SK-N-SH (cell line): ENCODE measurements at regions of chr2 and their contacts with region 1.

Region 1: DNA sequence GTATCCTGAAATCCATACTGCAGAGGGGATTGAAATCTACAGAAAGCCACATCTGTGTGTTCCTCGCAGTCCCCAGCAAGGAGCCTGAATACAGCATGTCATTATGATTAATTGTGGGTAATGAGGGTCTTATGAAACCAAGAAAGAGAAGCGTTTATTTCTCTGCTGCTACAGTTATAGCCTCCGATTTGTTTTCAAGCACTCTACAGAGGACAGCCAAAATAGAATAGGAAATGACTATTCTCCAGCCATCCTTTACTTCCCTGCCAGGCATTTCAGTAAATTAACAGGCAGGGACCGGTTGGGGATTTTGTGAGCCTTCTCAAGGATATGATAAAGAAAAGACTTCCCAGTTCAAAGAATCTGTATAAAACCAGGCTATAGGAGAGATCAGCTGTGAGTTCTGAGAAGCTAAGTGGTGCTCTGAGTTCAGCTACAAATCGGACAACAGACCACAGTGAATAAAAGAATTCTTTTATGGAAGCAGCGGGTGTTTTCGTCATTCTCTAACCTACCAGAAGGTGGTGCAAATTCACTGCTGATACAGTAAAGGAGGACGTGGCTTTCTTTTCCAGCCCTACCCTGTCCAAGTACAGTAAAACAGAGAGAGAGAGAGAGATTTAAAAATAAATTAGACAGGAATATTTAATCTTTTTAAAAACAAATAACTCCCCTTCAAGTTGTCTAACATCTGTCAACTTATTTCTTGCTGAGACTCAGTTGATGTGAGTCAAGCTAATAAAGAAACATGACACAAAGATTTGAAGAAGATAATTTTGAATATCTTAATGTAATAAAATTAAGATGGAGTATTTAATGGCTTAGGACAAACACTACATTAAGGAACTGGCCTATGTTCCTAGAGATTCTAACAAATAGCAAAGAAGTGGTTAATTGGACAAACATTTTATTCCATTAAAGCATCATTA is 133.7 kb downstream of the INSIG2 start:
- DNase-seq: peak; percentile 72
- H3K4me3 ChIP-seq: no peak overlapping the region; a peak in 1 of 4 replicates
- H3K27ac ChIP-seq: no peak overlapping the region
- H3K4me1 ChIP-seq: peaks cover 0 to 5% of the 10 kb centered on the region in 2 experiments; a peak in 1 of 4 replicates
- H3K27me3 ChIP-seq: peaks cover 56% of the 10 kb centered on the region
- CTCF ChIP-seq: peak; percentile 80
- EP300 ChIP-seq: no peak
- RAD21 ChIP-seq: peak; percentile 87

Region 2: DNA sequence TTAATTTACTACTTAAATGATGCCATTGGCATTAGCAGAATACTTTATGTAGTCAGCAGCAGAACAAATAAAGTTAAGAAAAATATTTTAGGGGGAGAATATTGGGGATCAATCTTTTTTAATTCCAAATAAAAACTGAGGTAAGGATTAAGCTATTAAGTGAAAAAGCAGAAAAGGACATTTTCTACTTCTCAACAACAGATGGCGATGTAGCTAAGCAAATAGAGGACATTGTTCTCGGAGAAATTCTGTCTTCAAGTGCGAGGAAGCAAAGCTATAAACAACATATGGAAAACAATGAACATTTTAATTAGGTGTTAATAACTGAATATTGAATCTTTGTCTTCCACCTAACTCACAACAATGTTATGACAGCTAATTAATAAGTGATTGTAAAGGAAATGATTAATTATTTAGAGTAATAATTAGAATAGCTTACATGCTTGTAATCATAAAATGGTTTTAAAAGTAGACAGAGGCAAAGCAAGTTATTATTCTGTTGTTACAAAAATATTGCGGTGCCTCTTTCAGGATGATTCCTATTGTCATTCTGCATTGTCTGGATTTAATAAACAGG is 175.2 kb before region 1 on chr2:
- CTCF ChIA-PET with region 1: interaction called, 15 read pairs
- POLR2A ChIA-PET with region 1: no interaction called
- DNase-seq: peak; percentile 23
- H3K4me3 ChIP-seq: peak overlapping the region in 1 of 2 experiments; percentile 2; a peak in 1 of 4 replicates
- H3K27ac ChIP-seq: no peak overlapping the region
- H3K4me1 ChIP-seq: peaks cover 0 to 8% of the 10 kb centered on the region in 2 experiments; a peak in 1 of 4 replicates
- H3K27me3 ChIP-seq: no peaks in the 10 kb centered on the region; the same call in 1 of the 2 replicates
- CTCF ChIP-seq: peak; percentile 72
- EP300 ChIP-seq: no peak
- RAD21 ChIP-seq: peak; percentile 88

Region 3: GRCh38 chr2:118202707-118203303 is 19.1 kb before region 1 on chr2:
- CTCF ChIA-PET with region 1: interaction called, 12 read pairs
- POLR2A ChIA-PET with region 1: no interaction called
- DNase-seq: peak; percentile 54
- H3K4me3 ChIP-seq: peak overlapping the region in 1 of 2 experiments; percentile 38; a peak in 1 of 4 replicates
- H3K27ac ChIP-seq: no peak overlapping the region
- H3K4me1 ChIP-seq: no peaks in the 10 kb centered on the region
- H3K27me3 ChIP-seq: peaks cover 16% of the 10 kb centered on the region; the same call in 1 of the 2 replicates
- CTCF ChIP-seq: peak; percentile 87
- EP300 ChIP-seq: no peak
- RAD21 ChIP-seq: peak; percentile 59

Region 4: DNA sequence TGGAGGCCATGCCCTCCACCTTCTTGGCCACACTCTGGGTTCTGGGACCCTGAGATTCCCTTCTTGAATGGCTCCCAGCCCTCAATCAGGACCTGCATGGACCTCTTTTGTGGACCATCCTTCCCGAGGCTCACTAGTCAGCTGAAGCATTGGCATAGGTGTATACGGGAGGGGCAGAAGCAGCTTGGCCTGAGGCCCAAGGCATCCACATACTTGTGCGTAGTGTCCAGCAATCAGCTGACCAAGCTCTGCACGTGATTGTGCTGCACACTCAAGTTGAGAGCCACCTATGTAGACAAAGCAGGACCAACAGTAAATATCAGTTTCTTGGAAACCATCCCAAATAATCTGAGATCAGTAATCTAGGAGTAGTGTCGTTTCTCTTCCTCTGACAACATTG is 14.0 kb before region 1 on chr2:
- CTCF ChIA-PET with region 1: interaction called, 13 read pairs
- POLR2A ChIA-PET with region 1: no interaction called
- DNase-seq: no peak
- H3K4me3 ChIP-seq: no peak overlapping the region
- H3K27ac ChIP-seq: no peak overlapping the region
- H3K4me1 ChIP-seq: no peaks in the 10 kb centered on the region
- H3K27me3 ChIP-seq: peaks cover 7% of the 10 kb centered on the region; the same call in 1 of the 2 replicates
- CTCF ChIP-seq: no peak
- EP300 ChIP-seq: no peak
- RAD21 ChIP-seq: no peak

Region 5: GRCh38 chr2:118865106-118865505 is 643.2 kb after region 1 on chr2:
- CTCF ChIA-PET with region 1: interaction called, 12 read pairs
- POLR2A ChIA-PET with region 1: no interaction called
- DNase-seq: peak; percentile 70
- H3K4me3 ChIP-seq: no peak overlapping the region; a peak in 1 of 4 replicates
- H3K27ac ChIP-seq: no peak overlapping the region
- H3K4me1 ChIP-seq: no peaks in the 10 kb centered on the region
- H3K27me3 ChIP-seq: peaks cover 50% of the 10 kb centered on the region
- CTCF ChIP-seq: peak; percentile 70
- EP300 ChIP-seq: no peak
- RAD21 ChIP-seq: peak; percentile 82